CD4-positive, alpha-beta T cell (primary cell): ENCODE measurements at regions of chr15 and their contacts with region 1.

Region 1: GRCh38 chr15:22253676-22254408 is 173.5 kb downstream of the OR4M2 start:
- DNase-seq: peak in 3 of 14 experiments; percentile 29 to 58 (median 53)
- ATAC-seq: peak; percentile 35
- H3K4me3 ChIP-seq: no peak overlapping the region
- H3K4me3 Mint-ChIP-seq: peak overlapping the region; percentile 2
- H3K27ac ChIP-seq: no peak overlapping the region
- H3K27ac Mint-ChIP-seq: no peak overlapping the region
- H3K4me1 ChIP-seq: peaks cover 32% of the 10 kb centered on the region
- H3K4me1 Mint-ChIP-seq: peaks cover 19% of the 10 kb centered on the region
- H3K27me3 ChIP-seq: peaks cover 18 to 21% of the 10 kb centered on the region in 2 experiments
- H3K27me3 Mint-ChIP-seq: peaks cover 55% of the 10 kb centered on the region
- CTCF ChIP-seq: no peak

Region 2: GRCh38 chr15:20376872-20377271 is 1877.0 kb before region 1 on chr15:
- CTCF ChIA-PET with region 1: no interaction called
- POLR2A ChIA-PET with region 1: no interaction called
- intact Hi-C with region 1: loop called in 1 of 2 experiments (anchors 5 kb)
- DNase-seq: no peak
- ATAC-seq: no peak
- H3K4me3 ChIP-seq: no peak overlapping the region
- H3K4me3 Mint-ChIP-seq: no peak overlapping the region
- H3K27ac ChIP-seq: no peak overlapping the region
- H3K27ac Mint-ChIP-seq: no peak overlapping the region
- H3K4me1 ChIP-seq: no peaks in the 10 kb centered on the region
- H3K4me1 Mint-ChIP-seq: no peaks in the 10 kb centered on the region
- H3K27me3 ChIP-seq: no peaks in the 10 kb centered on the region
- H3K27me3 Mint-ChIP-seq: no peaks in the 10 kb centered on the region
- CTCF ChIP-seq: no peak

Region 3: DNA sequence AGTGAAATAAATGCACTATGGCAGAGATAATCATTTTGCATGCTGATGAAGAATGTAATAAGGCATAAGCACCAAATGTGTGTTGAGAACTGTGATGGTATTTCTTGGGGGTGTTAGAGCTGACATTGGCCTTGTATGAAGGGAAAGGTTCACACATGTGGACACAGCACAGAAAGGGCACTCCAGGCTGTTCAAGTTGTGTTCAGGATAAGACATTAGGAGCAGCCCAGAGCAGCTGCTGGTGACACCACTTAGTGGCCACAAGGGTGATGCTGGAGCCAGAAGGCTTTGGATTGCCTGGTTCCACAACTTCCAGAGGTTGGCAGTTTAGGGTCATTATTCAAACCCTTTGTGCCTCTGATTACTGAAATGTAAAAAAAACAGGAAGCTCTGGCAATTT is 1867.6 kb before region 1 on chr15:
- CTCF ChIA-PET with region 1: no interaction called
- POLR2A ChIA-PET with region 1: no interaction called
- intact Hi-C with region 1: loop called in 1 of 2 experiments (anchors 5 kb)
- DNase-seq: no peak
- ATAC-seq: no peak
- H3K4me3 ChIP-seq: no peak overlapping the region
- H3K4me3 Mint-ChIP-seq: no peak overlapping the region
- H3K27ac ChIP-seq: no peak overlapping the region
- H3K27ac Mint-ChIP-seq: no peak overlapping the region
- H3K4me1 ChIP-seq: no peaks in the 10 kb centered on the region
- H3K4me1 Mint-ChIP-seq: no peaks in the 10 kb centered on the region
- H3K27me3 ChIP-seq: no peaks in the 10 kb centered on the region
- H3K27me3 Mint-ChIP-seq: no peaks in the 10 kb centered on the region
- CTCF ChIP-seq: no peak

Region 4: DNA sequence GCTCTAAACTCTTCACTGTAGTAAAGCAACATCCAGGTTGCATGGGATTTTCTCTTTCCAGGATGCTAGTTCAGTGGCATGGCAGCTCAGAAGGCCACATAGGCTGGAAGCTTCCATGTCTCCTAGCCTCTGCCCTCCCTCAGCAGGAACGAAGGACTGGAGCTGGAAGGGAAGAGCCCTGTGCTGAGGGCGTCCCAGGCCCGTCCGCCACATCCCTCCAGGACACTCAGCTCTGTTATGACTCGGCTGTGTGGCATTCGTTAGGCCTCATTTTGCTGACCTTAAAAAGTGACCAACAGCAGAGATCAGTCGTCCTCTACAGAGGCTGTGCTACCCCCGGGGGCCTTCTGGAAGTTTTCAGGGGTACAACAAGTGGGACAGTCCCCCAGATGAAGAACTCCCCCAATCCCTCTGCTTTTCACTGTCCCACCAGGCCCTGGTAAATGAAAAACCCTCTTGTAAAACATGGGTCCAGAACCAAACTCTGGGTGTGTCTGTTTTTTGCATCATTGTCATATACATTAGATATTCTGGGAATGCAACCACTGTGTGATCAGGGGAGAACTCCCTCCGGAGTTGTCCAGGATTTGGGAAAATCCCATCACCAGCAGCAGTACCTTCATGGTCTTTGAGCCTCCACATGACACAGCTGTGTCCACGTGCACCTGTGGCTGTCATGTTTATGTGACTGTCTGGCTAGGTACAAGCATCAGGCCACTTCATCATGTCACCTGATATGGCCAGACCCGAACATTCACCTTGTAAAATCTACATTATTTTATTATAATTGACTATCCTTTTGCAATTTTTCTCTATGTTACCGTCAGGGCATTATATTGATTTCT is 23.6 kb before region 1 on chr15:
- CTCF ChIA-PET with region 1: no interaction called
- POLR2A ChIA-PET with region 1: no interaction called
- intact Hi-C with region 1: loop called (anchors 2 kb)
- DNase-seq: peak in 2 of 14 experiments; percentile 4 to 31
- ATAC-seq: no peak
- H3K4me3 ChIP-seq: no peak overlapping the region
- H3K4me3 Mint-ChIP-seq: no peak overlapping the region
- H3K27ac ChIP-seq: no peak overlapping the region
- H3K27ac Mint-ChIP-seq: no peak overlapping the region
- H3K4me1 ChIP-seq: no peaks in the 10 kb centered on the region
- H3K4me1 Mint-ChIP-seq: no peaks in the 10 kb centered on the region
- H3K27me3 ChIP-seq: no peaks in the 10 kb centered on the region
- H3K27me3 Mint-ChIP-seq: no peaks in the 10 kb centered on the region
- CTCF ChIP-seq: no peak